ENCODE measurements at regions of chr17 and their contacts with region 1.

Region 1: DNA sequence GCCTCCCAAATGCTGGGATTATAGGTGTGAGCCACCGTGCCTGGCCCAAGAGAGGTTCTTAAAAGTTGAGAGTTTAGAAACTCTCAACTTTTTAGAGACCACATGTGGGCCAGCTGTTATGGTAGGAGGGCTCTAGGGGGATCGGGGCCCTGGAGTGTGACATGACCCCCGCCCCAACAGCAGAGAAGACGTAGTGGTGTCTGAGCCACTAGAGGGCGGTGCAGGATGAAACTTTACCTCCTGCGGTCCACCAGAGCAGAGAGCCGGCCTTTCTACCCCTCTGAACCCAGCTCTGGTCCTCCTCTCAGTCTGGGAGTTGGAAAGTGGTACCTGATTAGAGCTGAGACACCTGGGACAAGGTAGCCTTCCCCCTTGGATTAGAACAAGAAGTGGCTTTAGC is 7.4 kb downstream of the CDK5RAP3 start:
- DNase-seq: peak; percentile 8 to 65 (median 49)
- ATAC-seq: peak; percentile 68
- H3K4me3 ChIP-seq: no peak overlapping the region
- H3K4me3 Mint-ChIP-seq: no peak overlapping the region
- H3K27ac ChIP-seq: no peak overlapping the region
- H3K27ac Mint-ChIP-seq: no peak overlapping the region
- H3K4me1 ChIP-seq: no peaks in the 10 kb centered on the region
- H3K4me1 Mint-ChIP-seq: peaks cover 6% of the 10 kb centered on the region
- H3K27me3 ChIP-seq: no peaks in the 10 kb centered on the region
- H3K27me3 Mint-ChIP-seq: no peaks in the 10 kb centered on the region
- CTCF ChIP-seq: peak; percentile 58

Region 2: DNA sequence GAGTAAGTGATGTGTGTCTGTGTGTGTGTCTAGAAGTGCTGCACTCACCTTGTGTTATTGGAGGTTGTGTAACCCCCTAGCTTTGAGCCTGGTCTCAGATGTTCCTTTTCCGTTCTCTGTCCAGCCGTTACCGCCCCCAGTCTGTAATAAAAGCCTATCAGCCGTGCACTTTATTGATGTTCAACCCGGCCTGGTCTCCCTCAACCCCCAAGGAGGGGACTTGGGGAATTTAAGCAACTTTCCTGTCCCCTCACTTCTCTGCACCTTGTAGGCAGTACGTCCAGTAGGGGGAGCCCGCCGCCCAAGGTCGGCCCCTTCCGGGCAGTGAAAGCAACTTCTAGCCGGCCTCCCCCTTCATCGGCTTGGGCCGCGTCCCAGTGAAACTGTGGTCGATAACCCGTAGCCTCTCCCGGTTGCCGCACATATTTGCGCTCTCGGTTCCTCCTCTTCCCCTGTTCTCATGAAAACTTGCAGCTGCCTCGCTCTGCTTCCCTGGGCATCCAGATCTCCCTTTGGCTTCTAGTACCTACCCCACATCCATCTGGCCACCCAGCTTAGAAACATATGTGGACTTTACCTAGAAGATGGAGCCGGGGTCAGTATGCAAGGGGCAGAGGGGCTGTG is 29.1 kb before region 1 on chr17:
- CTCF ChIA-PET with region 1: interaction called, 421 read pairs
- POLR2A ChIA-PET with region 1: no interaction called
- intact Hi-C with region 1: no loop called
- DNase-seq: peak; percentile 47 to 88 (median 79)
- ATAC-seq: peak; percentile 53
- H3K4me3 ChIP-seq: peak overlapping the region; percentile 26 to 36
- H3K4me3 Mint-ChIP-seq: peak overlapping the region; percentile 82
- H3K27ac ChIP-seq: peak overlapping the region in 1 of 2 experiments; percentile 28
- H3K27ac Mint-ChIP-seq: peak overlapping the region; percentile 81
- H3K4me1 ChIP-seq: peaks cover 51% of the 10 kb centered on the region
- H3K4me1 Mint-ChIP-seq: peaks cover 46% of the 10 kb centered on the region
- H3K27me3 ChIP-seq: no peaks in the 10 kb centered on the region
- H3K27me3 Mint-ChIP-seq: no peaks in the 10 kb centered on the region
- CTCF ChIP-seq: peak; percentile 78

Region 3: DNA sequence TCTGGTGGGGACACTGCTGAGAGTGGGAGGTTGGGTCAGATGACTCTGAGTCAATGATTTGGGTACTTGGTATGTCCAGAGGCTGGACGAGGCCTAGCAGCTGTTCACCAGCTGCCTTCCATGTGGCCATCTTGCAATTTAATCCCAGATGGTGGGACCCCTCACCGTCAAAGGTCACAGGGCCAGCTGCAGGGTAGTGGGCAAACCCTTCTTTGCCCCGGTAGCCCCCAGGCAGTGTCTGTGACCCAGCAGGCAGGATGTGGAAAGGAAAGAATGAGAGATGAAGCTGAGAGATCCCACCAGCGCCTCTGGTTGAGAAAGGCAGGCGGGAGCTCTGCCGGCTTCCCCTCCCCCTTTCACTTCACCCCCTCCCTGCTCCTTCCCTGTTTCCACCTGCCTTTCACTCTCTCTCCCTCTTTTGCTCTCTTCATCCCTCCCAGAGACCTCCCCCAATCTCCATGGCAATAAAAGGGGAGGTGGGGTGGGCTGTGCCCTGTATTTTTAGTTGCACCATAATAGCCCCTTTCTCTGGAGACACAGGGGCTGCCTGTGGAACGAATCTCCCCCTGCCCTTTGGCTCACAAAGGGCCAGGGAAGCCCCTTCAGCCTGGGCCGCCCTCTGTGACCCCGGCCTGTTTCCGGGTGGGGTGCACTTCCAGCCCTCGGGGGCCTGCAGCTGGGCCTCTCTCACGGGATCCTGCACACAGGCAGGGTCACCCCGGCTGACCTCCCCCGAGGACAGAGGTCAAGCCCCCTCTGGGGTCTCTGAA is 12.8 kb after region 1 on chr17:
- CTCF ChIA-PET with region 1: interaction called, 11 read pairs
- POLR2A ChIA-PET with region 1: no interaction called
- intact Hi-C with region 1: no loop called
- DNase-seq: no peak
- ATAC-seq: no peak
- H3K4me3 ChIP-seq: no peak overlapping the region
- H3K4me3 Mint-ChIP-seq: no peak overlapping the region
- H3K27ac ChIP-seq: no peak overlapping the region
- H3K27ac Mint-ChIP-seq: no peak overlapping the region
- H3K4me1 ChIP-seq: no peaks in the 10 kb centered on the region
- H3K4me1 Mint-ChIP-seq: no peaks in the 10 kb centered on the region
- H3K27me3 ChIP-seq: no peaks in the 10 kb centered on the region
- H3K27me3 Mint-ChIP-seq: peaks cover 7% of the 10 kb centered on the region
- CTCF ChIP-seq: no peak

Region 4: GRCh38 chr17:48804925-48805411 is 826.6 kb after region 1 on chr17:
- CTCF ChIA-PET with region 1: no interaction called
- POLR2A ChIA-PET with region 1: no interaction called
- intact Hi-C with region 1: no loop called
- DNase-seq: peak; percentile 50 to 80 (median 67)
- ATAC-seq: peak; percentile 99
- H3K4me3 ChIP-seq: no peak overlapping the region
- H3K4me3 Mint-ChIP-seq: no peak overlapping the region
- H3K27ac ChIP-seq: no peak overlapping the region
- H3K27ac Mint-ChIP-seq: no peak overlapping the region
- H3K4me1 ChIP-seq: no peaks in the 10 kb centered on the region
- H3K4me1 Mint-ChIP-seq: no peaks in the 10 kb centered on the region
- H3K27me3 ChIP-seq: no peaks in the 10 kb centered on the region
- H3K27me3 Mint-ChIP-seq: peaks cover 14% of the 10 kb centered on the region
- CTCF ChIP-seq: peak; percentile 87

Measured in CD8-positive, alpha-beta T cell (primary cell).